ENCODE measurements at regions of chr17 and their contacts with region 1.

Region 1: DNA sequence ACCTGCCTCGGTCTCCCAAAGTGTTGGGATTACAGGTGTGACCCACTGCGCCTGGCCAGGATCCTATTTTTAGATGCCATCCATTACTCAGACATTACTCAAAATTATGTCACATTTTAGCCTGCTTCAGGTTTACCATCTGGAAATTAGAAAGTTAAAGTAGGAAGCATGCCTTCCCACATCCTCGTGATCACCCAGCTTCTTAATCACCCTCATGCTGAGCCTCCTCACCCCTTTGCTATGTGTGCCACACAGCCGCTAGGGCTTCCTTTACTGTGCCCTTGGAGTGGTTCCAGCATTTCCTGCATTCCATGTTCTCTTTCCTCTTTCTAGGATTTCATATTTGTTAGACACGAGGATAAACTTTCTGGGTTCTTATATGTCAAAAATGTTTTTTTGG is 9.3 kb downstream of the ADORA2B start:
- DNase-seq: no peak
- H3K4me3 Mint-ChIP-seq: no peak overlapping the region
- H3K27ac Mint-ChIP-seq: no peak overlapping the region
- H3K4me1 Mint-ChIP-seq: peaks cover 22% of the 10 kb centered on the region
- H3K27me3 Mint-ChIP-seq: peaks cover 27% of the 10 kb centered on the region

Region 2: DNA sequence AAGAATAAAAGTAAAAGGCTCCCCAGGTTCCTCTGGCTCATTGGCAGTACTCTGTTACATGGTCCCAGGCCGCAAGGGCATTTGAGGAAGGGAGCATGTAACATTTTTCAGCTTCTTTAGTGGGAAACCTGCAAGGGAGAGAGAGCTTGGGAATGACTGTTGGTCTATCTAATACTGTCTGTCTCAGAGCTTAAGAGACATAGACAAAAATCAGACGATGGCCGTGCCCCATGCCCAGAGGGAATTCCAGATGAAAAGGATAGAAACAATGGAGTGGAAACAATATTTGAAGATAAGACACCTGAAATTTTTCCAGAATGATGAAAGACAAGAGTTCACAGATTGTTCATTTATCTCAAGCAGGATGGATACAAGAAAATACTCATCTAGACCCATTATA is 57.4 kb before region 1 on chr17:
- CTCF ChIA-PET with region 1: no interaction called
- intact Hi-C with region 1: loop called (anchors 1 kb)
- DNase-seq: no peak
- H3K4me3 Mint-ChIP-seq: no peak overlapping the region
- H3K27ac Mint-ChIP-seq: no peak overlapping the region
- H3K4me1 Mint-ChIP-seq: peaks cover 19% of the 10 kb centered on the region
- H3K27me3 Mint-ChIP-seq: no peaks in the 10 kb centered on the region

Region 3: GRCh38 chr17:15920758-15921239 is 33.4 kb before region 1 on chr17:
- CTCF ChIA-PET with region 1: no interaction called
- intact Hi-C with region 1: no loop called
- DNase-seq: no peak
- H3K4me3 Mint-ChIP-seq: no peak overlapping the region
- H3K27ac Mint-ChIP-seq: no peak overlapping the region
- H3K4me1 Mint-ChIP-seq: no peaks in the 10 kb centered on the region
- H3K27me3 Mint-ChIP-seq: peaks cover 12% of the 10 kb centered on the region

Region 4: DNA sequence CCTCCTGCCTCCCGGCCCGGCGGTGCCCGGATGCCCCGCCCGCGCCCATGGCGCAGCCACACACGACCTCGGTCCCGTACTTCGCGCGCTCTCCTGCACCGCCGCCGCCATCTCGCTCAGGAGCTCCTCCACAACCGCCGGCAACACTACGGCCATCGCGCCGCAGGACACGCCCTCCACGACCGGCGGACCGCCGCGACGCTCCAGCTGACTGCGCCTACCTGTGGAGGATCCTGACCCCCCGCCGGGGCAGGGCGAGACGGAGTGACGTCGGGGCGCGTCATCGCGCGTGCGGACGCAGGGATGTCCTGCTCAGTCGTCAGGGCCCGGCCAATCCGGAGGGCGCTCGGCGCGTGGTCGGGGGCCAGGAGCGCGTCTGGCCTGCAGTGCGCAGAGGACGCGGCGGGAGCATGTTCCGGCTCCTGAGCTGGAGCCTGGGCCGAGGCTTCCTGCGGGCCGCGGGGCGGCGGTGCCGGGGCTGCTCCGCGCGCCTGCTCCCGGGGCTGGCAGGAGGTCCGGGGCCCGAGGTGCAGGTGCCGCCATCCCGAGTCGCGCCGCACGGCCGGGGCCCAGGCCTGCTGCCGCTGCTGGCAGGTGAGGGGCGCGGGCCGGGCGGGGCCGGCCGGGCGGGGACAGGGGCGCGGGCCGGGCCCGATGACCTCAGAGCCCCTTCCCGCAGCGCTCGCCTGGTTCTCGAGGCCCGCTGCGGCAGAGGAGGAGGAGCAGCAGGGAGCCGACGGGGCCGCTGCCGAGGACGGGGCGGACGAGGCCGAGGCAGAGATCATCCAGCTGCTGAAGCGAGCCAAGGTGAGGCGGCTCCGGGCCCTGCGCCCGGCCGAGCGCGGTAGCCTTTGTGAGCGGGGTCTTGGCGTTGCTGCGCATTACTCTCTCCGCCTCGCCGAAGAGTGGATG is 45.5 kb after region 1 on chr17 and contains the starts of genes TTC19 and ZSWIM7:
- CTCF ChIA-PET with region 1: interaction called, 3 read pairs
- intact Hi-C with region 1: loop called (anchors 1 kb)
- DNase-seq: peak; percentile 93
- H3K4me3 Mint-ChIP-seq: peak within 1 kb of the TSS; percentile 98
- H3K27ac Mint-ChIP-seq: peak within 1 kb of the TSS; percentile 92
- H3K4me1 Mint-ChIP-seq: peaks cover 23% of the 10 kb centered on the region
- H3K27me3 Mint-ChIP-seq: no peaks in the 10 kb centered on the region
- total RNA-seq, gene TTC19: 18.8 to 20.8 TPM
- total RNA-seq, gene ZSWIM7: 8.3 to 10.8 TPM

Region 5: DNA sequence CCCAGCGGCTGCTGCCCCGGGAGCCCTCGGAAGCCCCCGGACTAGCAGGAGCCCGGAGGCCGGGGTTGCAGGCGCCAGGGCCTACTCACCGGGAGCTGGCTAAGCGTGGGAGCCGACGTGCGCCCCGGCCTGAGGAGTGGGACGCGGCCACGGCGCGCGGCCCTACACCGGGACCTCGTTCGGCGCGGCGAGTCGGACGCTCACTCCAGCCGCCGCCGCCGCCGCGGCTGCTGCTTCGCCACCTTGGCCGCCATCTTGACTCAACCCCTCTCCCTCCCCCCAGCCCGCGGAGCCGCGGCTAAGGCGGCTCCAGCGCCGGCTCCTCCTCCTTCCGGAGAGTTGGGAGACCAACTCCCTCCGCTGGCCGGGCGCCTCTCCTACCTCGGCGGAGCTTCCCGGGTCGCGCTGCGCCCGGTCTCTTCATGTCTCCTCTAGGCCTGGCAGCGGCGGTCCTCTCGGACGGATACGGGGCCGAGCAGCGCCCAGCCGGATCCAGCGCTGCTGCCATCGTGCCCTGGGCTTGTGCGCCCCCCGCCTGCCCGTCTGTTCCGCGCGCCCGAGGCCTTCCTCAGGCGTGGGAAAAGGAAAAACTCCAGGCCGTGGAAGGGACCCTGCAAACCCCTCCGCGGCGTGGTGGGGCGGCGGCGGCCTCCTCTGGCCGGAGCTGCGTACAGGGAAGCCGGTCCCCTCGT is 261.2 kb after region 1 on chr17 and contains the start of gene NCOR1:
- CTCF ChIA-PET with region 1: no interaction called
- intact Hi-C with region 1: loop called (anchors 2 kb)
- DNase-seq: peak; percentile 93
- H3K4me3 Mint-ChIP-seq: peak within 1 kb of the TSS; percentile 99
- H3K27ac Mint-ChIP-seq: peak within 1 kb of the TSS; percentile 95
- H3K4me1 Mint-ChIP-seq: peaks cover 44% of the 10 kb centered on the region
- H3K27me3 Mint-ChIP-seq: no peaks in the 10 kb centered on the region
- total RNA-seq, gene NCOR1: 101 to 104 TPM

Region 6: DNA sequence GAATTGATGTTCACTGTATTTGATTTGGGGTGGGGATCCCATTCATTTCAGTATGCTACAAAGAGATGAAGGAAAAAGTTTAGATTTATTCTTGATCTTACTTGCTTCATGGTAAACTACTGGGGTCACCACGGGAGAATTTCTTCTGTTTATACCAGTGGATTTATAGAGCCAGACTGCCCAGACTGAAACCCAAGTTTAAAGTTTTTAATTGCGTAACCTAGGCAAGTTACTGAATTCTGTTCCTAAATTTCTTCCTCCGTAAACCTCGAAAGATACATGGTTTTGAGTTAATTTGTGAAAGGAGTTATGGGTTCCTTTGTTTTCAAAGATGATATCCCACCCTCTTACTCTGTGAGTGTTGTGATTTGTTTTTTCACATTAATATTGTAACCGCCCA is 289.2 kb after region 1 on chr17:
- CTCF ChIA-PET with region 1: no interaction called
- intact Hi-C with region 1: no loop called
- DNase-seq: no peak
- H3K4me3 Mint-ChIP-seq: no peak overlapping the region
- H3K27ac Mint-ChIP-seq: no peak overlapping the region
- H3K4me1 Mint-ChIP-seq: peaks cover 15% of the 10 kb centered on the region
- H3K27me3 Mint-ChIP-seq: no peaks in the 10 kb centered on the region

Region 7: DNA sequence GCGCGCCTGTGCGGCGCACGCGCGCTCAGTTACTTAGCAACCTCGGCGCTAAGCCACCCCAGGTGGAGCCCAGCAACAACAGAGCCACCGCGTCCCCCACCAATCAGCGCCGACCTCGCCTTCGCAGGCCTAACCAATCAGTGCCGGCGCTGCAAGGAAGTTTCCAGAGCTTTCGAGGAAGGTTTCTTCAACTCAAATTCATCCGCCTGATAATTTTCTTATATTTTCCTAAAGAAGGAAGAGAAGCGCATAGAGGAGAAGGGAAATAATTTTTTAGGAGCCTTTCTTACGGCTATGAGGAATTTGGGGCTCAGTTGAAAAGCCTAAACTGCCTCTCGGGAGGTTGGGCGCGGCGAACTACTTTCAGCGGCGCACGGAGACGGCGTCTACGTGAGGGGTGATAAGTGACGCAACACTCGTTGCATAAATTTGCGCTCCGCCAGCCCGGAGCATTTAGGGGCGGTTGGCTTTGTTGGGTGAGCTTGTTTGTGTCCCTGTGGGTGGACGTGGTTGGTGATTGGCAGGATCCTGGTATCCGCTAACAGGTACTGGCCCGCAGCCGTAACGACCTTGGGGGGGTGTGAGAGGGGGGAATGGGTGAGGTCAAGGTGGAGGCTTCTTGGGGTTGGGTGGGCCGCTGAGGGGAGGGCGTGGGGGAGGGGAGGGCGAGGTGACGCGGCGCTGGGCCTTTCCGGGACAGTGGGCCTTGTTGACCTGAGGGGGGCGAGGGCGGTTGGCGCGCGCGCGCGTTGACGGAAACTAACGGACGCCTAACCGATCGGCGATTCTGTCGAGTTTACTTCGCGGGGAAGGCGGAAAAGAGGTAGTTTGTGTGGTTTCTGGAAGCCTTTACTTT is 426.6 kb after region 1 on chr17 and contains the start of gene UBB:
- CTCF ChIA-PET with region 1: no interaction called
- intact Hi-C with region 1: loop called (anchors 1 kb)
- DNase-seq: peak; percentile 96
- H3K4me3 Mint-ChIP-seq: peak within 1 kb of the TSS; percentile 90
- H3K27ac Mint-ChIP-seq: peak within 1 kb of the TSS; percentile 96
- H3K4me1 Mint-ChIP-seq: peaks cover 35% of the 10 kb centered on the region
- H3K27me3 Mint-ChIP-seq: no peaks in the 10 kb centered on the region
- total RNA-seq, gene UBB: 1,579 to 1,628 TPM

Measured in activated naive CD4-positive, alpha-beta T cell treated with anti-CD3 and anti-CD28 coated beads for 36 hours (primary cell).